Breast epithelium (tissue), 4 donors: ENCODE measurements at regions of chr6 and their contacts with region 1.

Region 1: DNA sequence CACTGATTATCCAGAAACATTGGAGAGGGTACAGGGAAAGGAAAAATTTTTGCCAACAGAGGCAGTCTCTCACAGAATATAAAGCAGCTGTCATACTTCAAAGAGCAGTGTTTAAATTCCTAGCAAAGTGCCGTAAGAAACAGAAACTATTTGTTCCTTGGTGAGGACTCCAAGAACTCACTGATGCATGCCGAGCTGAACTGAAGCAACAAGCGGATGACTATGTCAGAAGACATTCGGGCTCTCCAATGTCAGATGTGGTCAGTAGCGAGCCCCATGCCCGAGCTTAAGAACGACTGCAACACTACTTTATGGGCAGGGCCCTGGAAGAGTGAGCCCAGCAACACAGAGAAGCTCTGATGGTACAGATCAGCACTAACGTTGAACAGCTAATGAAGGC is 54.7 kb downstream of the OR2B6 start:
- DNase-seq: no peak
- H3K4me3 ChIP-seq: no peak overlapping the region
- H3K27ac ChIP-seq: no peak overlapping the region
- H3K4me1 ChIP-seq: no peaks in the 10 kb centered on the region
- H3K27me3 ChIP-seq: peaks cover 0 to 4% of the 10 kb centered on the region in 2 donors
- CTCF ChIP-seq: no peak
- POLR2A ChIP-seq: no peak

Region 2: DNA sequence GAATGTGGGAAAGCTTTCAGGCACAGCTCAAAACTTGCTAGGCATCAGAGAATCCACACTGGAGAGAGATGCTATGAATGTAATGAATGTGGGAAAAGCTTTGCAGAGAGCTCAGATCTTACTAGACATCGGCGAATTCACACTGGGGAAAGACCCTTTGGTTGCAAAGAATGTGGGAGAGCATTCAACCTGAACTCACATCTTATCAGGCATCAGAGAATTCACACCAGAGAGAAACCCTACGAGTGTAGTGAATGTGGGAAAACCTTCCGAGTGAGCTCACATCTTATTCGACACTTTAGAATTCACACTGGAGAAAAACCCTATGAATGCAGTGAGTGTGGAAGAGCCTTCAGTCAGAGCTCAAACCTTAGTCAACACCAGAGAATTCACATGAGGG is 77.3 kb after region 1 on chr6:
- intact Hi-C with region 1: loop called (anchors 5 kb)
- DNase-seq: no peak
- H3K4me3 ChIP-seq: no peak overlapping the region
- H3K27ac ChIP-seq: no peak overlapping the region
- H3K4me1 ChIP-seq: no peaks in the 10 kb centered on the region
- H3K27me3 ChIP-seq: no peaks in the 10 kb centered on the region
- CTCF ChIP-seq: no peak
- POLR2A ChIP-seq: no peak

Region 3: DNA sequence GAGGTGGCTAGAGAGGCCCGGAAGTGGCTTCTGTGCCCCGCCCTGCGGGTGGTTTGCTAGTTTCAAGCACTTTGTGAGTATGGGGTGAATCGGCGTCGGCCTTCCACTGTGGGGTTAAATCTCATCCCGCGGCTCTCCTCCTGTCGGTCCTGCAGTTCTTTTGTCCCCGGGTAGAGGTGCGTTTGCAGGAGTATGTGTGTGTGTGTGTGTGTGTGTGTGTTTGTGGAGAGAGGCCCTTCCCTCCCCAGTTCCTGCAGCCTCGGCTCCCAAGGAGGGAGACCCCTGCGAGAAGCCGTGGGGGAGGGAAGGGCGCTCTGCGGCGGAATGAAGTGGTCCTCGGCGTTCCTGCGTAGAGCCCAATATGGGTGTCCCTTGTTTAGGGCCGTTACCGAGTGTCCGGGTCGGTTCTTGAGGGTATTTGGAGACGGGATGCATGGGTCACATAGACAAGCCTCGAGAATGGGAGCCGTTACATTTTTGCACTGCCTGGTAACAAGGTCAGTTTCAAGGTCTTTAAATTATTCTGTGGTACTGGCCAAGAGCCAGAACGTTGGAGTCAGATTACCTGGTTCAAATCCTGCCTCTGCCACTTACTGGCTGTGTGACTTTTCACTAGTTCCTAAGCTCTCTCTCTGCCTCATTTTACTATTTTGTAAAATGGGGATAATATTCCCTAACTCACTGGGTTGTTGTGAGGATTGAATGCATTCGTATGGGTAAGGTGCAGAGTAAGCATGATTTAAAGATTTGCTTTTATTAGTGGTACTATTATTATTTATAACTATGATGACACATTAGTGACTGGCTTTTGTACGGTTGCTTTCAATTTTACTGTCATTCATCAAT is 338.4 kb after region 1 on chr6 and contains the start of gene ZKSCAN3:
- intact Hi-C with region 1: no loop called
- DNase-seq: peak; percentile 75 to 81
- H3K4me3 ChIP-seq: peak within 1 kb of the TSS; percentile 64 to 80 (median 70)
- H3K27ac ChIP-seq: peak within 1 kb of the TSS; percentile 62 to 67
- H3K4me1 ChIP-seq: peaks cover 0 to 4% of the 10 kb centered on the region in 2 donors
- H3K27me3 ChIP-seq: no peaks in the 10 kb centered on the region
- CTCF ChIP-seq: no peak
- POLR2A ChIP-seq: no peak
- total RNA-seq, gene ZKSCAN3: 3.4 to 6.4 (median 3.6) TPM